Natural killer cell (primary cell): ENCODE measurements at regions of chr2 and their contacts with region 1.

Region 1: DNA sequence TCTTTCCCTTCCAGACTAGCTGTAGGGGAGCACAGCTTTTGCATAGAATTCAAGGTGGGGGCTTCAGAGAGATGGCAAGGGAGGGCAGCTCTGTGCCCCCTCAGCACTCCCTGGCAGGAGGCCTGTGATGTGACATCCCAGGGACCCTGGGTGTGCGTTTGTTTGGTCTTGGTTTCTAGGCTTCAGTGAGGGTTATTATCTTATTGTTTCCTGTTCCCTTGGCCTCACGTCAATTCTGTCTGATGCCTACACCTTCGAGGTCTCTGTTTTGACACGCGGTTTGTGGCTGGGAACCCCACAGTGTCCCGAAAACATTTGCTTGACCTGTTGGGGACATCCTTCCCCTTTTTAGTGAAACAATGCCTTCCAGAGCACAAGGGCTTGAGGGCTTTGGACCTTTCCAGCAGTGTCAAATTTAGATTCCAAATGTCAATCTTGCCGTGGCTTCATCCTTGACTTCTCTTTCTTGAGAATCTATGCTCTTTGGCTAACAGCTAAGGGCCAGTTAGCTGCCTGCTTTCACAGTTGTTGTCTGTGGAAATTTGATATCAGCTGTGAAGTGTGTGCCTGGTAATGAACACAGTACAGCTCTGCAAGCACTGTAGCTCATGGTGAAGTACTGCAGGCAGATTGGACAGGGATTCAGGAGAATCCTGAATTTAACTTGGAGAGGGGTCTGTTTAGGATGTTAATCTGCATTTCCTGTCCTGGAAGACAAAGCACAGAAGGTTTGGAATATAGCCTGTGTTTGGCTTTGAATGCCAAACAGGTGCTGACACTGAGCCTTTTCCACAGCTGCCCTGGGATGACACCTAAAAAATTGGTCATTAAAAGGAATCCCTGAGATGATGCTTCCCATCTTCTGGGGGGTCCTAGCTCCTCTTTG is 108.2 kb upstream of the CXCR4 start:
- DNase-seq: peak; percentile 72 to 77
- ATAC-seq: peak; percentile 85 to 94 (median 93)
- H3K4me3 ChIP-seq: no peak overlapping the region
- H3K4me3 Mint-ChIP-seq: peak overlapping the region; percentile 40
- H3K27ac ChIP-seq: peak overlapping the region; percentile 61
- H3K27ac Mint-ChIP-seq: peak overlapping the region; percentile 86 to 87
- H3K4me1 ChIP-seq: peaks cover 31% of the 10 kb centered on the region
- H3K4me1 Mint-ChIP-seq: peaks cover 22 to 32% of the 10 kb centered on the region in 2 donors
- H3K27me3 ChIP-seq: no peaks in the 10 kb centered on the region
- H3K27me3 Mint-ChIP-seq: peaks cover 10 to 30% of the 10 kb centered on the region in 2 donors
- CTCF ChIP-seq: no peak

Region 2: DNA sequence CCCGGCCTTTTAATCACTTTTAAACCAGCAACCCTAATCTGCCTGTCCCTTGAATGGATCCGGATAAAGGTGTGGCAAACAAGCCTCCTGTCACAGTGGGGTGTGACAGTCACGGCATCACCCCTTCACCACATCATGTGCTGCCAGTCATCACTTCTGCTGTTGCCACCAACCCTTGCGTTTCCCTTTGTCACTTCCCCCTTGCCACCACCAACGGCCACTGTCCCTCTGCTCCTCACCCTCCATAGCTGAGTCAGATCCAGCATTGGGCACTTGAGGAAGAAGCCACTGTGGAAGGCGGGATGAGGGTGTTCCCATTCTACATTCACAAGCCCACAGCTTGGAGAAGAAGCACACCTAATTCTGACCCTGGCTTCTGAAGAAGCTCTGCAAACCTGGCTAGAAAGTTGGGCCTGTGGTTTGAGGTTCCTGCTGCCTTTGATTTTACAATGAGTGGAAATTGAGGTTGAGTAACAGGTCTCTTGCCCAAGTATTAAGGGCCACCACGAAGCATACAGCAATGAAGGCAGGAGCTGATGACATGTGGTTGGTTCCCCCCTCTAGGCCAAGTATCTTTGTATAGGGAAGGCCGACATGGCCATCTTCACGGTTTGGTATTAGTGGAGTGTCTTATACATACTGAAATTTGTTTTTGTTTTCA is 217.9 kb before region 1 on chr2:
- intact Hi-C with region 1: loop called (anchors 5 kb)
- DNase-seq: peak; percentile 70 to 88
- ATAC-seq: peak; percentile 88 to 95 (median 93)
- H3K4me3 ChIP-seq: no peak overlapping the region
- H3K4me3 Mint-ChIP-seq: peak overlapping the region; percentile 57
- H3K27ac ChIP-seq: peak overlapping the region; percentile 59
- H3K27ac Mint-ChIP-seq: peak overlapping the region; percentile 88 to 91
- H3K4me1 ChIP-seq: peaks cover 28% of the 10 kb centered on the region
- H3K4me1 Mint-ChIP-seq: peaks cover 20 to 28% of the 10 kb centered on the region in 2 donors
- H3K27me3 ChIP-seq: no peaks in the 10 kb centered on the region
- H3K27me3 Mint-ChIP-seq: peaks cover 0 to 6% of the 10 kb centered on the region in 2 donors
- CTCF ChIP-seq: no peak

Region 3: GRCh38 chr2:136212423-136213378 is 13.5 kb before region 1 on chr2:
- intact Hi-C with region 1: loop called (anchors 2 kb)
- DNase-seq: peak; percentile 23 to 71
- ATAC-seq: peak; percentile 66 to 86 (median 79)
- H3K4me3 ChIP-seq: no peak overlapping the region
- H3K4me3 Mint-ChIP-seq: peak overlapping the region; percentile 41
- H3K27ac ChIP-seq: peak overlapping the region; percentile 58
- H3K27ac Mint-ChIP-seq: peak overlapping the region; percentile 83
- H3K4me1 ChIP-seq: peaks cover 42% of the 10 kb centered on the region
- H3K4me1 Mint-ChIP-seq: peaks cover 31 to 40% of the 10 kb centered on the region in 2 donors
- H3K27me3 ChIP-seq: no peaks in the 10 kb centered on the region
- H3K27me3 Mint-ChIP-seq: peaks cover 3 to 17% of the 10 kb centered on the region in 2 donors
- CTCF ChIP-seq: no peak

Region 4: DNA sequence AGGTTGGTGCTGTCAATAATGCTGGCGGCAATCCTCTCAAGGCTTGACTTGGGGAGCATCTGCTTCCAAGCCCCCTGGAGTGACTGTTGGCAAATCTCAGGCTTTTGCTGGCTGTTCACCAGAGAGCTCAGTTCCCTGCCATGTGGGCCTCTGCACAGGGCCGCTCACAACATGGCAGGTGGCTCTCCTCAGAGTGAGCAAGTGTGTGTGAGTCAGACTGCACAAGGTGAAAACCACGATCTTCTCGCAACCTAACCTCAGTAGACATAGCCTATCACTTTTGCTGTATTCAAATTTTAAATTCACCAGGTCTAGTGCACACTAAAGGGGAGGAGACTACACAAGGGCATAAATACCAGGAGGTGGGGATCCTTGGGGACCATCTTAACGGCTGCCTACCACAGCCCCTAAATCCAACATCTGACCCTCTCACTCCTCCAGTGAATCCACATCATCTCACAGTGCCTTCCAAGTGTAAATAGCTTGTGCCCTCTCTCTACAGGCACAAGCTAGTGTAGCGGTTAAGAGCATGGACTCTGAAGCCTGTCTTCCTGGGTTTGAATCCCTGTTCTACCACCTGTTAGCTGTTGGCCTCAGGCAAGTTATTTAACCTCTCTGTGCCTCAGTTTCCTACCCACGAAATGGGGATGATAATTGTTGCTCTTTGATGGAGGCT is 79.5 kb after region 1 on chr2:
- intact Hi-C with region 1: loop called (anchors 5 kb)
- DNase-seq: peak; percentile 49 to 76
- ATAC-seq: peak; percentile 96 to 100 (median 98)
- H3K4me3 ChIP-seq: no peak overlapping the region
- H3K4me3 Mint-ChIP-seq: no peak overlapping the region
- H3K27ac ChIP-seq: no peak overlapping the region
- H3K27ac Mint-ChIP-seq: peak overlapping the region in 1 of 2 donors; percentile 72
- H3K4me1 ChIP-seq: peaks cover 10% of the 10 kb centered on the region
- H3K4me1 Mint-ChIP-seq: peaks cover 9 to 11% of the 10 kb centered on the region in 2 donors
- H3K27me3 ChIP-seq: no peaks in the 10 kb centered on the region
- H3K27me3 Mint-ChIP-seq: peaks cover 10 to 14% of the 10 kb centered on the region in 2 donors
- CTCF ChIP-seq: no peak

Region 5: DNA sequence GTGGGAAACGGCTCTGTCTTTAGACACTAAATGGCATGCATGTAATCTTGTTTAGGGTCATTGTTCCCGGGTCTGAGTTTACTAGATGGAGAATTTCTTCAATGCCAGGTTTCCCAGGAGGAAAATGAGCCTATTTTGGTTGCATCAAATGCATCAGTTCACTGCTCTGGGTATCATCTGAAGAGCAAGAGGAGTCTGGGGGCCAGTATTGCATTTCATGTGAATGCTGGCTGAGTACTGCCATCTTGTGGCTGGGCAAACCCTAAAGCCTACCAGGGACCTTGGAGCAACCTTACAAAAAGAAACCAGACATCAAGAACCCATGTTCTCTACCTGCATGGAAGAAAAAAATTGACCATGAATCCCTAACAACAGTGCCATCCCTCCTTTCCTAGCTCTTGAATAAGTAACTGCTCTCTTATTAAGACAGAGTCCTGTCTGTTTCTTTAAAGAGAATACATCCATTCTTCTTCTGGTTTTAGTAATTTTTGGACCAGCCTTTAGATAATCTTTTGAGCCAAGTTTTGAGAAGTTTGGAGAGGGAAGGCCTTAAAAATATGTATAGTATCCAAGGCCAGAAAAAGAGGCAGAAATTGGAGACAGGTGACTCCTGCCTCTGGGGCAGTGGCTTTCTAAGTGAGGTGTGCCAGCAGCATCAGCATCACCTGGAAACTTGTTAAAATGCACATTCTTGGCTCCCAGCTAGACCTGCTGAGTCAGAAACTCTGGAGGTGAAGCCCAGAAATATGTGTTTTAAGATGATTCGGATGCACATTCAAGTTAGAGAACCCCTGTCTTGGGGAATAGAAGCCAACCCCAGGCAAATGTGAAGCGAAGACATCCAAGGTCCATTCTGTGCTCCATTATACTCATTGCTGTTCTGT is 152.8 kb after region 1 on chr2:
- intact Hi-C with region 1: loop called (anchors 5 kb)
- DNase-seq: peak; percentile 54 to 90
- ATAC-seq: peak; percentile 61 to 77 (median 76)
- H3K4me3 ChIP-seq: no peak overlapping the region
- H3K4me3 Mint-ChIP-seq: no peak overlapping the region
- H3K27ac ChIP-seq: no peak overlapping the region
- H3K27ac Mint-ChIP-seq: no peak overlapping the region
- H3K4me1 ChIP-seq: peaks cover 21% of the 10 kb centered on the region
- H3K4me1 Mint-ChIP-seq: peaks cover 7 to 26% of the 10 kb centered on the region in 2 donors
- H3K27me3 ChIP-seq: no peaks in the 10 kb centered on the region
- H3K27me3 Mint-ChIP-seq: no peaks in the 10 kb centered on the region
- CTCF ChIP-seq: peak; percentile 80